ENCODE measurements at regions of chr19 and their contacts with region 1.

Region 1: GRCh38 chr19:13861732-13862531 is 15.0 kb upstream of the NANOS3 start:
- DNase-seq: peak; percentile 97
- ATAC-seq: peak; percentile 82
- H3K4me3 ChIP-seq: peak overlapping the region; percentile 68
- H3K27ac ChIP-seq: peak overlapping the region; percentile 88
- H3K4me1 ChIP-seq: peaks cover 9% of the 10 kb centered on the region
- H3K27me3 ChIP-seq: no peaks in the 10 kb centered on the region
- CTCF ChIP-seq: peak; percentile 90

Region 2: DNA sequence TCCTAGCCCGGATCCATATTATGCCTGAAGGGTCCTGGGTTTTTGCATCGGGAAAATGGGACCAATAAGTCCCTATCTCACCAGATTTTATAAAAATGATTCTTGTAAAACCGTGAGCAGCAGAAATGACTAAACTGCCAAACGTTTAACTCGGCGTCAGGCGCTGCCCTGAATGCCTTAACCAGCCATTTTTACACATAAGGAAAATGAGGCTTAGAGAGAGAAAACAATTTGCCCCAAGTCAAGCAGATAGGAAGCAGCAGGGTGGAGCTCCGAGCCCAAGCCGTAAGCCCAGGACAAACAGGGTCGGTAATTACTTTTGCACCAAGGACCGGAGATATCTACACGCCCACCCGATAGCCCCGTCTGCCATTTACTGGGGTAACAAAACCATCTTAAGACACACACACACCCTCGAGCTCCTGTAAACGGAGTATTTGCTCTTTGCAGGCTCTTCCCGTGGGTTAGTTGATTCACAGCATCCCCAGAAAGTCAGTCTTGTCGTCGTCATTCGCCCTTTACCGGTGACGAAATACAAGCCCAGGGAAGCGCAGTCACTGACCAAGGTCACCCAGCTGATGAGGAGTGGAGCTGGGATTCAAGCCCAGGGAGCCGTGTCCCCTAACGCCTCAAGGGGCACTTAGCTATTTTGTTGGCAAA is 113.6 kb before region 1 on chr19:
- CTCF ChIA-PET with region 1: no interaction called
- POLR2A ChIA-PET with region 1: no interaction called
- intact Hi-C with region 1: no loop called
- DNase-seq: peak; percentile 25
- ATAC-seq: no peak; the same call in 1 of the 2 replicates
- H3K4me3 ChIP-seq: peak overlapping the region; percentile 97
- H3K27ac ChIP-seq: peak overlapping the region; percentile 61
- H3K4me1 ChIP-seq: peaks cover 9% of the 10 kb centered on the region; the same call in 1 of the 2 replicates
- H3K27me3 ChIP-seq: no peaks in the 10 kb centered on the region
- CTCF ChIP-seq: no peak

Region 3: GRCh38 chr19:13784731-13785452 is 77.0 kb before region 1 on chr19:
- CTCF ChIA-PET with region 1: interaction called, 19 read pairs
- POLR2A ChIA-PET with region 1: no interaction called
- intact Hi-C with region 1: loop called (anchors 1 kb)
- DNase-seq: peak; percentile 86
- ATAC-seq: peak; percentile 81
- H3K4me3 ChIP-seq: no peak overlapping the region; the same call in 1 of the 2 replicates
- H3K27ac ChIP-seq: no peak overlapping the region
- H3K4me1 ChIP-seq: peaks cover 19% of the 10 kb centered on the region
- H3K27me3 ChIP-seq: no peaks in the 10 kb centered on the region
- CTCF ChIP-seq: peak; percentile 90

Region 4: DNA sequence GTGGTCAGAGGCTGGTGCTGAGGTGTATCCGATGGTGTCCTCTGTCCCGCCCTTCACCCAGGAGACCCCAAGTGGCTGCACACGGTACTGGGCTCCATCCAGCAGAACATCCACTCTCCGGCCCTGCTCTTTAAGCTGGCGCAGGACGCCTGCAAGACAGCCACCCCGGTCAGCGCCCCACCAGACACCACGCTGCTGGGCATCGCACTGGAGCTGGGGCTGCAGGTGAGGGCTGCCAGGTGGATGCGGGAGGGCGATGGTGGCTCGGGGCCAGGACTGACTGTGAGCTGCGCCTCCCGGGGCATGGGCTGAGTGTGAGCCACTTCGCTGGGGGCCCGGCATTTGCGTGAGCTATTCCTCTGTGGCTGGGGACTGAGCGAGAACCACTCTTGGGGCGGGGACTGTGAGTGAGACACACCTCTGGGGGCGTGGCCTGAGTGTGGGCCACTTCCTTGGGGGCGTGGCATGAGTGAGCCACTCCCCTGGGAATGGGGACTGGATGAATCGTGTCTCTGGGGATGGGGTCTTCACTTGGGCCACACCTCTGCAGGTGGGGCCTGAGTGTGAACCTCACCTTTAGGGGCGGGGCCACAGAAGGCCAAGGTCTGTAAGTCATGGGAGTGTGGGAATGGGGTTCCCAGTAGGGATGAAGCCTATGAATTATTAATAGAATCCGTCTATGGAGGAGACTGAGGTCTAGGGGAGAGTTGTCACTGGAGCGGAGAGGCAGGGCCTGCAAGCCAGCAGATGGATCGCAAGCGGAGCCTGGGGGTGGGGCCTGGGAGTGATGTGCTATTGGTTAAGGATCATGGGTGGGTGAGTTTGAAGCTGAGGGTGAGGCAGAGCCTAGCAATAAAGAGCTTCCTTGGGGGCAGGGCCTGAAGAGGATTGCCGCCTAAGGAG is 36.2 kb before region 1 on chr19:
- CTCF ChIA-PET with region 1: interaction called, 7 read pairs
- POLR2A ChIA-PET with region 1: no interaction called
- intact Hi-C with region 1: loop called (anchors 5 kb)
- DNase-seq: peak; percentile 49
- ATAC-seq: peak; percentile 58
- H3K4me3 ChIP-seq: no peak overlapping the region
- H3K27ac ChIP-seq: no peak overlapping the region
- H3K4me1 ChIP-seq: no peaks in the 10 kb centered on the region
- H3K27me3 ChIP-seq: no peaks in the 10 kb centered on the region
- CTCF ChIP-seq: no peak

Region 5: GRCh38 chr19:13839130-13839937 is 22.6 kb before region 1 on chr19:
- CTCF ChIA-PET with region 1: interaction called, 17 read pairs
- POLR2A ChIA-PET with region 1: interaction called, 35 read pairs
- intact Hi-C with region 1: loop called (anchors 1 kb)
- DNase-seq: peak; percentile 94
- ATAC-seq: peak; percentile 25
- H3K4me3 ChIP-seq: peak overlapping the region; percentile 82
- H3K27ac ChIP-seq: peak overlapping the region; percentile 96
- H3K4me1 ChIP-seq: peaks cover 72% of the 10 kb centered on the region
- H3K27me3 ChIP-seq: no peaks in the 10 kb centered on the region
- CTCF ChIP-seq: no peak

Region 6: GRCh38 chr19:13882836-13883235 is 20.9 kb after region 1 on chr19:
- CTCF ChIA-PET with region 1: no interaction called
- POLR2A ChIA-PET with region 1: no interaction called
- intact Hi-C with region 1: no loop called
- DNase-seq: no peak
- ATAC-seq: no peak
- H3K4me3 ChIP-seq: no peak overlapping the region
- H3K27ac ChIP-seq: no peak overlapping the region
- H3K4me1 ChIP-seq: peaks cover 11% of the 10 kb centered on the region
- H3K27me3 ChIP-seq: no peaks in the 10 kb centered on the region
- CTCF ChIP-seq: no peak

Region 7: DNA sequence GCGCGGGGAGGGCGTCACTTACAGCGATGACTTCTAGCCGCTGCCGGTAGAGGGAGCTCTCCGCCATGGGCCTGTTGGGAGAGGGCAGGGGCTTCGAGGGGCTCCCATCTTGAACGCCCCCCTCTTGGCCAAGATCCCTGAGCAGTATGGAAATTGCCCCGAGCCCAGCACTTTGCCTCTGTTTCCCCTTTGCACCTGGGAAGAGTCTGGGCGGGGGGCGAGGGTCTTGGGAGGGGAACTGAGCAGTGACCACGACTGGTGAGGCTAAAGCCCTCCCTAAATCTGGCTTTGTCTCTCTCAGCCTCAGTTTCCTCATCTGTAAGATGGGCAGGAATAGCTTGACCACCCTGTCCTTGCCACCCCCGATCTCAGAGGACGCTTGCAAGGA is 197.2 kb after region 1 on chr19:
- CTCF ChIA-PET with region 1: interaction called, 10 read pairs
- POLR2A ChIA-PET with region 1: no interaction called
- intact Hi-C with region 1: no loop called
- DNase-seq: no peak
- ATAC-seq: no peak
- H3K4me3 ChIP-seq: no peak overlapping the region
- H3K27ac ChIP-seq: no peak overlapping the region
- H3K4me1 ChIP-seq: peaks cover 21% of the 10 kb centered on the region
- H3K27me3 ChIP-seq: no peaks in the 10 kb centered on the region
- CTCF ChIP-seq: peak; percentile 94

Region 8: GRCh38 chr19:14142262-14143190 is 280.6 kb after region 1 on chr19:
- CTCF ChIA-PET with region 1: no interaction called
- POLR2A ChIA-PET with region 1: no interaction called
- intact Hi-C with region 1: no loop called
- DNase-seq: no peak
- ATAC-seq: no peak
- H3K4me3 ChIP-seq: no peak overlapping the region
- H3K27ac ChIP-seq: no peak overlapping the region
- H3K4me1 ChIP-seq: peaks cover 3% of the 10 kb centered on the region; the same call in 1 of the 2 replicates
- H3K27me3 ChIP-seq: no peaks in the 10 kb centered on the region
- CTCF ChIP-seq: no peak